ENCODE measurements at regions of chrX and their contacts with region 1.

Region 1: GRCh38 chrX:44068043-44068442 is 94.9 kb upstream of the NDP start:
- DNase-seq: no peak
- ATAC-seq: no peak
- H3K4me3 ChIP-seq: no peak overlapping the region
- H3K27ac ChIP-seq: no peak overlapping the region
- H3K4me1 ChIP-seq: no peaks in the 10 kb centered on the region
- H3K27me3 ChIP-seq: peaks cover 0 to 3% of the 10 kb centered on the region in 2 experiments; a peak in 1 of 5 replicates
- CTCF ChIP-seq: no peak
- EP300 ChIP-seq: no peak
- POLR2A ChIP-seq: no peak
- RAD21 ChIP-seq: no peak

Region 2: GRCh38 chrX:44017676-44018075 is 50.4 kb before region 1 on chrX:
- CTCF ChIA-PET with region 1: no interaction called
- POLR2A ChIA-PET with region 1: no interaction called
- in situ Hi-C with region 1: no loop called
- intact Hi-C with region 1: loop called (anchors 5 kb)
- DNase-seq: no peak
- ATAC-seq: no peak
- H3K4me3 ChIP-seq: no peak overlapping the region
- H3K27ac ChIP-seq: no peak overlapping the region
- H3K4me1 ChIP-seq: no peaks in the 10 kb centered on the region; a peak in 1 of 5 replicates
- H3K27me3 ChIP-seq: no peaks in the 10 kb centered on the region
- CTCF ChIP-seq: no peak
- EP300 ChIP-seq: no peak
- POLR2A ChIP-seq: no peak
- RAD21 ChIP-seq: no peak

Region 3: GRCh38 chrX:44183329-44183728 is 115.3 kb after region 1 on chrX:
- CTCF ChIA-PET with region 1: no interaction called
- POLR2A ChIA-PET with region 1: no interaction called
- in situ Hi-C with region 1: no loop called
- intact Hi-C with region 1: no loop called
- DNase-seq: no peak
- ATAC-seq: no peak
- H3K4me3 ChIP-seq: no peak overlapping the region
- H3K27ac ChIP-seq: no peak overlapping the region
- H3K4me1 ChIP-seq: no peaks in the 10 kb centered on the region
- H3K27me3 ChIP-seq: no peaks in the 10 kb centered on the region
- CTCF ChIP-seq: no peak
- EP300 ChIP-seq: no peak
- POLR2A ChIP-seq: no peak
- RAD21 ChIP-seq: no peak

Region 4: DNA sequence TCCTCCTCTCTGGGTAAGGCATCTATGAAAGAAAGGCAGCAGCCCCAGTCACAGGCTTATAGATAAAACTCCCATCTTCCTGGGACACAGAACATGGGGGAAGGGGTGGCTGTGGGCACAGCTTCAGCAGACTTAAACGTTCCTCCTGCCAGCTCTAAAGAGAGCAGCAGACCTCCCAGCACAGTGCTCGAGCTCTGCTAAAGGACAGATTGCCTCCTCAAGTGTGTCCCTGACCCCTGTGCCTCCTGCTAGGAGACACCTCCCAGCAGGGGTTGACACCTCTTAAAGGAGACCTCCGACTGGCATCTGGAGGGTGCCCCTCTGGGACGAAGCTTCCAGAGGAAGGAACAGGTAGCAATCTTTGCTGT is 185.5 kb after region 1 on chrX:
- CTCF ChIA-PET with region 1: no interaction called
- POLR2A ChIA-PET with region 1: no interaction called
- in situ Hi-C with region 1: no loop called
- intact Hi-C with region 1: no loop called
- DNase-seq: no peak
- ATAC-seq: peak; percentile 48; the same call in 2 of the 3 replicates
- H3K4me3 ChIP-seq: no peak overlapping the region
- H3K27ac ChIP-seq: peak overlapping the region; percentile 76
- H3K4me1 ChIP-seq: peaks cover 0 to 4% of the 10 kb centered on the region in 2 experiments; a peak in 4 of 5 replicates
- H3K27me3 ChIP-seq: no peaks in the 10 kb centered on the region
- CTCF ChIP-seq: no peak
- EP300 ChIP-seq: no peak
- POLR2A ChIP-seq: no peak
- RAD21 ChIP-seq: no peak

Measured in K562 (cell line).